Mammary epithelial cell (primary cell): ENCODE measurements at regions of chr14 and their contacts with region 1.

Region 1: GRCh38 chr14:76261371-76261811 is 109.7 kb downstream of the GPATCH2L start:
- DNase-seq: no peak
- H3K4me3 ChIP-seq: no peak overlapping the region
- H3K27ac ChIP-seq: no peak overlapping the region
- H3K4me1 ChIP-seq: no peaks in the 10 kb centered on the region
- H3K27me3 ChIP-seq: no peaks in the 10 kb centered on the region
- CTCF ChIP-seq: no peak

Region 2: DNA sequence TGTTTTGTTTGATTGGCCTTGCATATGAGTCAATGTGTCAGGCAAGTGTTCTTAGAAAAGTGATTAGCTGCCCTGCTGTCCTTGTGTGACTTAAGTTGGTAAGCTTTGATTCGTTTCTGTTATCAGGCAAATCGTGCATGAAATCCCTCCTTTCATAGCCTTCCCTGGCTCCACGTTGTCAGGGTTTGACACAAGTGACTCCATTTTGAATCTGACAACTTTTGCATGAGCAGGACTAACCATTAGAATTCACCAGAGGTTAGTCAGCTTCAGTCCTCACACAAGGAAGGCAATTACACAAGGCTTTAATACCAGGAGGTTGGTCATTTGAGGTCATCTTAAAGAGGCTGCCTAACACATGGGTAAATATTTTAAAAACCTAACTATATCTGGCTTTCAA is 41.5 kb before region 1 on chr14:
- CTCF ChIA-PET with region 1: no interaction called
- dilution Hi-C with region 1: loop called (anchors 5 kb)
- in situ Hi-C with region 1: no loop called
- intact Hi-C with region 1: no loop called
- DNase-seq: no peak
- H3K4me3 ChIP-seq: no peak overlapping the region
- H3K27ac ChIP-seq: no peak overlapping the region
- H3K4me1 ChIP-seq: no peaks in the 10 kb centered on the region
- H3K27me3 ChIP-seq: no peaks in the 10 kb centered on the region
- CTCF ChIP-seq: no peak